ENCODE measurements at regions of chr1 and their contacts with region 1.

Region 1: DNA sequence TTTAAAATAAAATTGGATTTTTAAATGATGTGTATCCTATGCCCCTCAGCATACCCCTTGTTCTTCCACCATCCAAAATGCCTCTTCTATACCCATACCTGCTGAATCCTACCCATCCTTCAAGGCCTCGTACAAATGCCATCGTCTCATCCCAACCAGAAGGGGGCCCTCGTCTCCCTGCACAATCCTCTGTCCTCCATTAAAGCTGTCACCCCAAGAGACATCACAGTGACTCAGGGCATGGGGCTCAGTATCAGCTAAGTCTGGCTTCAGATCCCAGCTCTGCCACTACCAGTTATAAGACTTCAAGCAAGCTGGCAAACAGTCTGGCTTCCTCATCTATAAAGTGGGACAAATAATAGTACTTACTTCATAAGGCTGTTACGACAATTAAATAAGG is 23.8 kb downstream of the IGFN1 start:
- DNase-seq: peak; percentile 37
- ATAC-seq: peak; percentile 87
- H3K4me3 Mint-ChIP-seq: no peak overlapping the region
- H3K27ac Mint-ChIP-seq: no peak overlapping the region
- H3K4me1 Mint-ChIP-seq: peaks cover 8% of the 10 kb centered on the region
- H3K27me3 Mint-ChIP-seq: peaks cover 21% of the 10 kb centered on the region
- CTCF ChIP-seq: no peak

Region 2: DNA sequence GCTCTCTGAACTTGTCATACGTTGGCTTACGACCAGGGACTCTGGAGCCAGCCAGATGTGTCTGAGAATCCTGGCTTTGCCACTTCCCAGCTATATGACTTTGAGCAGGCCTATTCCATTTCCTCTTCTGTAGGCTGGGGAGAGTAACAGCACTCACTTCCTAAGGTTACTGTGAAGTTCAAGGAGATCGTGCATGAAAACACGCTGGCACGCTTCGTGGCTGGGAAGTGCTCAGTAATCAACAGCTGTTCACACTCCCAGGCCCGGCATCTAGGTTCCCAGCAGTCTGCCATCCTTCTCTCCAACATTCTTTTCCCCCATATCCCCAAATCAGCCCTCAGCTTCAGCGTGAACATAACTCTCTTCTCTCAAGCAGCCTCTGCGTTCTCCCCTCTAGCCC is 89.4 kb before region 1 on chr1:
- CTCF ChIA-PET with region 1: no interaction called
- POLR2A ChIA-PET with region 1: no interaction called
- DNase-seq: no peak
- ATAC-seq: no peak
- H3K4me3 Mint-ChIP-seq: no peak overlapping the region
- H3K27ac Mint-ChIP-seq: no peak overlapping the region
- H3K4me1 Mint-ChIP-seq: peaks cover 10% of the 10 kb centered on the region
- H3K27me3 Mint-ChIP-seq: peaks cover 6% of the 10 kb centered on the region
- CTCF ChIP-seq: no peak

Region 3: GRCh38 chr1:201136355-201137023 is 78.0 kb before region 1 on chr1:
- CTCF ChIA-PET with region 1: no interaction called
- POLR2A ChIA-PET with region 1: no interaction called
- DNase-seq: no peak
- ATAC-seq: no peak
- H3K4me3 Mint-ChIP-seq: no peak overlapping the region
- H3K27ac Mint-ChIP-seq: no peak overlapping the region
- H3K4me1 Mint-ChIP-seq: no peaks in the 10 kb centered on the region
- H3K27me3 Mint-ChIP-seq: no peaks in the 10 kb centered on the region; the same call in 1 of the 2 replicates
- CTCF ChIP-seq: no peak

Region 4: DNA sequence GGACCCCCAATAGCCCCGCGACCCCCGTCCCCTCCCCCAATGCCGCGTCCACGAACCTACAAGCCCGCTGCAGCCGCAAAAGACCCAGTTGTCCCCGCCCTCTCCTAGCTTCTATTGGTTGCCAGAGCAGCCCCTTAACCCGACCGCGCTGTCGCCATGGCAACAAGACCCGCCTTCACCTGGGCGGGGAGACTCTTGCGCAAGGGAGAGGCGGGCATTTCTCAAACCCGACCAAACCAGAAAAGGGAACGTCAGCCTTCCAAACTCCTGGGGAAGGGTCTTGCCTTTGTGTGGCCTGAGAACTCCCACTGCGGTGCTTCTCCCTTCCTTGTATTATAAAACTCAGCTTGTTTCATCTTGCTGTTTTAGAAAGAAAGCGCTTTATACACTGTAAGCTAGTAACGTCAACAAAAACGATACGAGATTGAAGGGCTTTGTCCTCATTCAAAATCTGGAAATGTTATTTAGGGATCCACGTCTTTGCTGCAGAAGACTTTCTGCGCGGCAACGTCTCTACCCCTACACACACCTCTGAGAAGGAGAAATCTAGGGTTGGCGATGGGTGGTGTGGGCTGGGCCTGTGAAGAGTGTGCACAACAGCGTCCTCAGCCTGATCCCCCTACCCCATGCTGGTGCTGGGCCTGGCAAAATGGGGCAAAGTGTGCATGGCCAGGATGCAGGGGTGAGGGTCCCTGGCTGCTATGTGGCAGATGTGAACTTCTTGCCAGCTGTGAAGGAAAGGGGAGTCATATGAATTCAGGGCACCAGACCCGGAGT is 59.9 kb before region 1 on chr1 and contains the start of gene TMEM9:
- CTCF ChIA-PET with region 1: interaction called, 10 read pairs
- POLR2A ChIA-PET with region 1: no interaction called
- DNase-seq: peak; percentile 99
- ATAC-seq: peak; percentile 92
- H3K4me3 Mint-ChIP-seq: peak within 1 kb of the TSS; percentile 95
- H3K27ac Mint-ChIP-seq: peak within 1 kb of the TSS; percentile 93
- H3K4me1 Mint-ChIP-seq: peaks cover 17% of the 10 kb centered on the region
- H3K27me3 Mint-ChIP-seq: 0 out of 2 replicates have a peak, but pooled peaks cover 2% of the 10 kb centered on the region
- CTCF ChIP-seq: no peak
- total RNA-seq, gene TMEM9: 97.5 to 109 TPM (median 102 TPM) in 3 replicates

Region 5: GRCh38 chr1:201224666-201225370 is 10.4 kb after region 1 on chr1:
- CTCF ChIA-PET with region 1: interaction called, 20 read pairs
- POLR2A ChIA-PET with region 1: no interaction called
- DNase-seq: no peak
- ATAC-seq: no peak
- H3K4me3 Mint-ChIP-seq: no peak overlapping the region
- H3K27ac Mint-ChIP-seq: no peak overlapping the region
- H3K4me1 Mint-ChIP-seq: no peaks in the 10 kb centered on the region
- H3K27me3 Mint-ChIP-seq: peaks cover 5% of the 10 kb centered on the region
- CTCF ChIP-seq: no peak

Region 6: GRCh38 chr1:201444792-201445191 is 230.3 kb after region 1 on chr1:
- CTCF ChIA-PET with region 1: no interaction called
- POLR2A ChIA-PET with region 1: no interaction called
- DNase-seq: no peak
- ATAC-seq: no peak
- H3K4me3 Mint-ChIP-seq: no peak overlapping the region
- H3K27ac Mint-ChIP-seq: no peak overlapping the region
- H3K4me1 Mint-ChIP-seq: peaks cover 26% of the 10 kb centered on the region
- H3K27me3 Mint-ChIP-seq: peaks cover 3% of the 10 kb centered on the region; the same call in 1 of the 2 replicates
- CTCF ChIP-seq: no peak